ENCODE measurements at regions of chr11 and their contacts with region 1.

Region 1: DNA sequence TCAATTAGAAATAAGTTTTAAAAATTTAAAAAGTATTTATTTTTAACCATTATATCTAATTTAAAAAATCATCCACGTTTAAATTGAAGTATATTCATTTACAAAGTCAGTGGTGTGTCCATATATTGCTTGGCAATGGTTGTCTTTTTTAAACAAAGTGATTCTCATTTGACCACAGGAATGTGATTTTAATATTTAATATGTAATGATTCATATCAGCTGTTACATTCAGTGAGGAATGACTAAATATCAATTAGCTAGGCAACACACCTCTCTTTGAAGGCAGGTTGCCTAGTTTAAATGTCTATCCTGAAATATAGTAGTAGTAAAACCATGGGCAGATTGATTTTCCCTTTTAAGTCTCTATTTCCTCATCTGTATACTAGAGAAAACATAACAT is 392.2 kb upstream of the CCDC179 start:
- DNase-seq: no peak
- ATAC-seq: no peak
- H3K4me3 ChIP-seq: no peak overlapping the region
- H3K27ac ChIP-seq: no peak overlapping the region
- H3K4me1 ChIP-seq: no peaks in the 10 kb centered on the region
- H3K27me3 ChIP-seq: no peaks in the 10 kb centered on the region
- CTCF ChIP-seq: no peak
- POLR2A ChIP-seq: no peak
- RAD21 ChIP-seq: no peak

Region 2: GRCh38 chr11:23226331-23227077 is 25.9 kb before region 1 on chr11:
- CTCF ChIA-PET with region 1: no interaction called
- POLR2A ChIA-PET with region 1: no interaction called
- dilution Hi-C with region 1: no loop called
- in situ Hi-C with region 1: no loop called
- intact Hi-C with region 1: no loop called
- DNase-seq: peak; percentile 77
- ATAC-seq: peak; percentile 91
- H3K4me3 ChIP-seq: no peak overlapping the region
- H3K27ac ChIP-seq: peak overlapping the region; percentile 66; the same call in 1 of the 2 replicates
- H3K4me1 ChIP-seq: peaks cover 3% of the 10 kb centered on the region; the same call in 1 of the 2 replicates
- H3K27me3 ChIP-seq: no peaks in the 10 kb centered on the region
- CTCF ChIP-seq: no peak
- POLR2A ChIP-seq: no peak
- RAD21 ChIP-seq: no peak

Region 3: DNA sequence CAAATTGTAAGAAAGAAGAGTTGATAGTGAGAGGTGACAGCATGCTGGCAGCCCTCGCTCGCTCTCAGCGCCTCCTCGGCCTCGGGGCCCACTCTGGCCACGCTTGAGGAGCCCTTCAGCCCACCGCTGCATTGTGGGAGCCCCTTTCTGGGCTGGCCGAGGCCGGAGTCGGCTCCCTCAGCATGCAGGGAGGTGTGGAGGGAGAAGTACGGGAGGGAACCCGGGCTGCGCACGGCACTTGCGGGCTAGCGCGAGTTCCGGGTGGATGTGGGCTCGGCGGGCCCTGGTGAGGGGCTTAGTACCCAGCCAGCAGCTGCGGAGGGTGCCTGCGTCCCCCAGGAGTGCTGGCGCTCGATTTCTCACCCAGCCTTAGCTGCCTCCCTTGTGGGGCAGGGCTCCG is 147.6 kb after region 1 on chr11:
- CTCF ChIA-PET with region 1: no interaction called
- POLR2A ChIA-PET with region 1: no interaction called
- dilution Hi-C with region 1: no loop called
- in situ Hi-C with region 1: no loop called
- intact Hi-C with region 1: no loop called
- DNase-seq: no peak
- ATAC-seq: no peak
- H3K4me3 ChIP-seq: no peak overlapping the region
- H3K27ac ChIP-seq: no peak overlapping the region
- H3K4me1 ChIP-seq: no peaks in the 10 kb centered on the region
- H3K27me3 ChIP-seq: no peaks in the 10 kb centered on the region
- CTCF ChIP-seq: no peak
- POLR2A ChIP-seq: no peak
- RAD21 ChIP-seq: no peak

Region 4: GRCh38 chr11:23620617-23621016 is 368.2 kb after region 1 on chr11:
- CTCF ChIA-PET with region 1: no interaction called
- POLR2A ChIA-PET with region 1: no interaction called
- dilution Hi-C with region 1: no loop called
- in situ Hi-C with region 1: no loop called
- intact Hi-C with region 1: loop called (anchors 10 kb)
- DNase-seq: peak; percentile 34
- ATAC-seq: no peak
- H3K4me3 ChIP-seq: no peak overlapping the region
- H3K27ac ChIP-seq: no peak overlapping the region
- H3K4me1 ChIP-seq: no peaks in the 10 kb centered on the region
- H3K27me3 ChIP-seq: no peaks in the 10 kb centered on the region
- CTCF ChIP-seq: no peak
- POLR2A ChIP-seq: no peak
- RAD21 ChIP-seq: no peak

Measured in IMR-90 (cell line).